ENCODE measurements at regions of chr21 and their contacts with region 1.

Region 1: GRCh38 chr21:33924079-33924765 is 8.6 kb upstream of the ATP5PO start:
- DNase-seq: peak; percentile 42
- H3K4me3 ChIP-seq: no peak overlapping the region
- H3K27ac ChIP-seq: peak overlapping the region in 2 of 4 donors; percentile 22 to 27
- H3K4me1 ChIP-seq: peaks cover 5 to 14% (median 8%) of the 10 kb centered on the region in 3 donors
- H3K27me3 ChIP-seq: no peaks in the 10 kb centered on the region
- CTCF ChIP-seq: peak; percentile 86 to 93 (median 92)
- POLR2A ChIP-seq: no peak

Region 2: GRCh38 chr21:33801424-33802420 is 122.5 kb before region 1 on chr21:
- intact Hi-C with region 1: no loop called
- DNase-seq: no peak
- H3K4me3 ChIP-seq: no peak overlapping the region
- H3K27ac ChIP-seq: peak overlapping the region; percentile 26 to 70 (median 66)
- H3K4me1 ChIP-seq: peaks cover 5 to 26% (median 16%) of the 10 kb centered on the region in 3 donors
- H3K27me3 ChIP-seq: no peaks in the 10 kb centered on the region
- CTCF ChIP-seq: no peak
- POLR2A ChIP-seq: no peak

Region 3: DNA sequence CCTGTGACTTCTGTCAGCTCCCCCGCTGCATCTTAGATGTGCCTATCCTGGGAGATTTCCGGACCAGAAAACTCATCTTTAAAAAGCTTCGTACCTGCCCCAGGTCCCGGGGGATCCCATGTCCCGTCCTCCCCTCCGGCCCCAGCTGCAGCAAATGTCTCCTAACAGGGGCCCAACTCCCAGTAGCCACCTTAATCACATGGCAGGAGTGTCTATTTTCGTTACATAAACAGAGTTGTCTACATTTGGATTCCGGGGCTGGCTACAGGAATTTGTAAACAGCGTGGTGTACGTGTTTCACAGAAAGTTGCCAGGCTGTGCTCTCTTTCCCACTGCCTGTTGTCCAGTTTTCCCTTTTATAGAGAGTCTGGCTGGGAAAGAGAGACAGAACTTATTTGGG is 421.7 kb after region 1 on chr21:
- intact Hi-C with region 1: loop called (anchors 2 kb)
- DNase-seq: no peak
- H3K4me3 ChIP-seq: no peak overlapping the region
- H3K27ac ChIP-seq: peak overlapping the region in 3 of 4 donors; percentile 62 to 75 (median 69)
- H3K4me1 ChIP-seq: peaks cover 0 to 15% (median 0%) of the 10 kb centered on the region in 3 donors
- H3K27me3 ChIP-seq: peaks cover 0 to 6% (median 0%) of the 10 kb centered on the region in 4 donors
- CTCF ChIP-seq: no peak
- POLR2A ChIP-seq: no peak

Measured in esophagus squamous epithelium (tissue), 5 donors.